Activated CD4-positive, alpha-beta T cell treated with anti-CD3 and anti-CD28 coated beads, Interleukin-2, amount 10 ng/mL, durations not matched to agents 7 days and 5 days (primary cell): ENCODE measurements at regions of chr15 and their contacts with region 1.

Region 1: GRCh38 chr15:100341662-100342560 is at the start of gene ADAMTS17:
- DNase-seq: peak; percentile 96
- H3K4me3 Mint-ChIP-seq: peak within 1 kb of the TSS; percentile 54
- H3K27ac Mint-ChIP-seq: no peak within 1 kb of the TSS
- H3K4me1 Mint-ChIP-seq: peaks cover 18% of the 10 kb centered on the region
- H3K27me3 Mint-ChIP-seq: peaks cover 17% of the 10 kb centered on the region
- total RNA-seq, gene ADAMTS17: 4.1 to 5.0 TPM

Region 2: DNA sequence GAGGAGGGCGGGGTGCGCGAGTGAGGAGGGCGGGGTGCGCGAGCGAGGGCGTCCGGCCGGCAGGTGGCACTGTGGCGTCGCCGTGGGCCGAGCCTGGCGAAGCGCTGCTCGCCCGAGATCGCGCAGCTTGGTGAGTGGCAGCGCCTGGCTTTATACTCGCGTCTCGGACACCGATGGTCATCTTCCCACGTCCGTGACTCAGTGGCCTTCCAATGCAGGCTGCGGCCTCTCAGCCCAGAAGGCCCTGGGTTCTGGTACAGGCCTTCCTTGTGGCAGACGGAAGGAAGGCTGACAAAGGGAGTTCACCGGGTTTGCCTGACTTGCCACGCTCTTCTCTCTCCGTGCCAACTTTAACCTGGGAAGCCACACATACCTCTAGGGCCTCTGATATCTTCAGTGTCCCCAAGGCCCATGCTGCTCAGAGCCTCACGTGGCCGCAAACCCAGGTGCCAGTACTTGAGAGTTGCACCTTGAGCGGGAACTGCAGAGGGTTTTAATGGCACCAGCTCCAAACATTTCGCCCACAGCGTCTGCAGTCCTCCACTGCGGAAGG is 413.4 kb before region 1 on chr15:
- CTCF ChIA-PET with region 1: interaction called, 15 read pairs
- POLR2A ChIA-PET with region 1: no interaction called
- DNase-seq: peak; percentile 82
- H3K4me3 Mint-ChIP-seq: peak overlapping the region; percentile 86
- H3K27ac Mint-ChIP-seq: peak overlapping the region; percentile 92
- H3K4me1 Mint-ChIP-seq: peaks cover 16% of the 10 kb centered on the region
- H3K27me3 Mint-ChIP-seq: peaks cover 6% of the 10 kb centered on the region

Region 3: GRCh38 chr15:100318884-100319283 is 23.0 kb before region 1 on chr15:
- CTCF ChIA-PET with region 1: no interaction called
- POLR2A ChIA-PET with region 1: no interaction called
- DNase-seq: no peak
- H3K4me3 Mint-ChIP-seq: no peak overlapping the region
- H3K27ac Mint-ChIP-seq: no peak overlapping the region
- H3K4me1 Mint-ChIP-seq: no peaks in the 10 kb centered on the region
- H3K27me3 Mint-ChIP-seq: no peaks in the 10 kb centered on the region

Region 4: DNA sequence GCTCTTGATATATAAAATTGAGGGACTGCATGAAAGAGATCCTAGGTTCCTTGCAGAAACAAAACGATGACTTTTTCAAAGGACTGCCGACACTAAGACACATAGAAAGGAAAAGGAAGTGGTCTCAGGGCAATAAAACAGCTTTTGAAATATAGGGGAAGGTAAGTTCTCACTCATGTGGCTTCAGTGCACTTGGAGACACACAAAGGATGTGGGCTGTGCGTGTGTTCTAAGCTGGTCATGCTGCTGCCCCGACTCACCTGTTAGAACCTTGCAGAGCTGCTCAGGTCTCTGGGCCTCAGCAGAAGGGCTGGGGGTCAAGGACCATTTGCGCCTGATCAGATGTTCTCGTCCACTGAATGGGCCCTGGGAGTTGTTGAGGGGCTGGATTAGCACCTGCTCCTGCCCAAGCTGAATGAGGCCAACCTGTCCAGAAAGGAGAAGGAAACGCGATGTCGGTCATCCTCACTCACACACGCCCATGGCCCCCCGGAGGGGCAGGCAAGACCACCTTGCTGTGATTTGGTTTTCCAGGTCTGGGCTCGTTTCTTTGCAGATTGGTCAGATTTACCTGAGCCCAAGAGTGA is 11.2 kb before region 1 on chr15:
- CTCF ChIA-PET with region 1: interaction called, 117 read pairs
- POLR2A ChIA-PET with region 1: no interaction called
- DNase-seq: peak; percentile 70
- H3K4me3 Mint-ChIP-seq: peak overlapping the region; percentile 61
- H3K27ac Mint-ChIP-seq: peak overlapping the region; percentile 92
- H3K4me1 Mint-ChIP-seq: peaks cover 71% of the 10 kb centered on the region
- H3K27me3 Mint-ChIP-seq: no peaks in the 10 kb centered on the region